ENCODE measurements at regions of chr19 and their contacts with region 1.

Region 1: DNA sequence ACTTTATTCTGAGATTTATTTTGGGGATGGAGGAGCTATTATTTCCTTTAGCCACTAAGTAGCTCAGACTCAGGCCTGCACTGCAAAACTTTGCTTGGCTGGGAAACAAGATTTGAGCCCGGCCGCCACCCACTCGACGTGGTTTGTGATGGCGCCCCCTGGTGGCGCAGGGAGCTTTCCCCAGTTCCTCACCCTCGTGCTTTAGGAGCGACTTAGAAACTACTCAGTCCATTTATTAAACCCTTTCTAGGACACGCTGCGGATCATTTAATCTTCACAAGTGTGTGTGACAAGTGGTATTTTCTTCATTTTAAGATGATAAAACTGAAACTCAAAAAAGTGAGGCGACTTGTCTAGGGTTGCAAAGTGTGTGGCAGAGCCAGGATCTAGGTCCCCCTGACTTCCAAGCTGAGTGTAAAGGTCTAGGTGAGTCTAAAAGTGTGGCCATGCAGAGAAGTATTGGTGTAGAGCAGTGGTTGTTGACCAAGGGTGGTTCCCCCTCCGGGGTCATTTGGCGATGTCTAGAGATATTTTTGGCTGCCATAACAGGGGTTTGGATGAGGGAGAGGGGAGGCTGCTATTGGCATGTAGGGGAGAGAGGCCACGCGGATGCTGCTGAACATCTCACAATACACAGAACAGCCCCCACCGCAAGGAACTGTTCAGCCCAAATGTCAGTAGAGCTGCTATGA is 2.2 kb downstream of the CXCL17 start:
- DNase-seq: peak; percentile 92
- H3K4me3 Mint-ChIP-seq: peak overlapping the region; percentile 17
- H3K27ac Mint-ChIP-seq: peak overlapping the region; percentile 37
- H3K4me1 Mint-ChIP-seq: peaks cover 55% of the 10 kb centered on the region
- H3K27me3 Mint-ChIP-seq: no peaks in the 10 kb centered on the region
- CTCF ChIP-seq: peak; percentile 93

Region 2: DNA sequence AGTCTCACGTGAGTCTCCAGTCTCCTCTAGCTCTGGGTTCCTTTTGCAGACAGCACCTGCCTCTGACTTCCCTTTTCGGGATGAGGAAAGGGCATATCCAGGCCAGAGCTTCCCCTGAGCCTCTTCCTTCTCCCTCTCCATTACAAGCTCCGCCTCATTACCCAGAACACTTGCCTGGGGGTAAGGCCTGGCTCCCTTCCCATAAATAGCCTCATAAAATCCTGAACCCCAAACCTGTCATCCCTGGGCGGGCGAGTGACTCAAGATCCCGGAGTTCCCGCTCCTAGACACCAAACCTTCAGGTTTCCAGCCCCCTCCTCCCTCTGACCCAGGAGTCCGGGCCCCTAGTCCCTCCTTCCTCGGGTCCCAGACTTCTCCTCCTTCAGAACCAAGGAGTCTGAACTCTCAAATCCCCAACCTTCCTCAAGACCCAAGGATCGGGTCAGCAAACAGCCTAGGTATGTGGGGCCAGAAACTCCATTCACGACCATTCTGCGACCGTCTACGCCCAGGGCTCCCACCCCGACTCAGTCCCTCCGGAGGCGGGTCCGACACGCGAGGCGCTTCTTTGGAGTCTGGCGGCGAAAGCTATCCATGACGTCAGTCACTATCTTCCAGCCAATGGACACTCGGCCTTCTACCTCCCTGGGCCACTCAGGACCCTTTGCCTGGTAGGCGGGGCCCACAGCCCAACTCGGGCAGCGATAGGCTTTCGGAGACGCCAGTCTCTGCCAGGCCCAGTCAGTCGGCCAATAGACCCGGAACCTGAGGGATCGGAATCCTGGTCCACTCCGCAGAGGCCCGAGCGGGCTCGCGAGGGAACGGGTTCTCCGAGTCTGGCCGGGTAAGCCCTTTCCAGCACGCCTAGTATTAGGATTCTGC is 43.9 kb before region 1 on chr19:
- CTCF ChIA-PET with region 1: interaction called, 11 read pairs
- intact Hi-C with region 1: no loop called
- DNase-seq: peak; percentile 100
- H3K4me3 Mint-ChIP-seq: peak overlapping the region; percentile 86
- H3K27ac Mint-ChIP-seq: peak overlapping the region; percentile 90
- H3K4me1 Mint-ChIP-seq: peaks cover 29% of the 10 kb centered on the region
- H3K27me3 Mint-ChIP-seq: peaks cover 21% of the 10 kb centered on the region
- CTCF ChIP-seq: no peak

Region 3: DNA sequence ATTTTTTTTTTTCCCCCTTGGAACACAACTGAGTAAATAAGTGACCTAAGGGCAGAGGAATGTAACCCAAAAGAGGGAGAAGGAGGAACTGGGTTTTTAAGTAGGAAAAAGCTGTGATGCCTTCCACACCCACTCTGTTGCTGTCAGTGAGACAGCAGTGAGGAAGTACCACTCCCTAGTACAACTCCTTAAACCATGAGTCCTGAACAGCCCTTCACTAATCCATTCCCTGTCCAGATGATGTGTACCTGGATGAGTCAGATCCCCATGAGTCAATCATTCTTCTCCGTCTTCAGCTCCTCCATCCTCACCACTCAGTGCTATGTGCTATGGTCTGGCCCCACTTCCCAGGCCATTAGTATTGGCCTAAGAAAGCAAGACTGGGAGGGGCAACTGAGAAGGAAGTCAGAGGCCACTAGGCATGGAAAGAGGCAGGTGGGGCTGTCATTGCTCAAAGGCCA is 15.1 kb after region 1 on chr19:
- CTCF ChIA-PET with region 1: interaction called, 25 read pairs
- intact Hi-C with region 1: no loop called
- DNase-seq: peak; percentile 82
- H3K4me3 Mint-ChIP-seq: no peak overlapping the region
- H3K27ac Mint-ChIP-seq: peak overlapping the region; percentile 82
- H3K4me1 Mint-ChIP-seq: peaks cover 46% of the 10 kb centered on the region
- H3K27me3 Mint-ChIP-seq: no peaks in the 10 kb centered on the region
- CTCF ChIP-seq: no peak

Measured in Calu3 (cell line).